ENCODE measurements at regions of chr3 and their contacts with region 1.

Region 1: GRCh38 chr3:15629860-15630597 is 28.5 kb downstream of the BTD start:
- DNase-seq: peak; percentile 71
- H3K4me3 Mint-ChIP-seq: peak overlapping the region; percentile 22
- H3K27ac Mint-ChIP-seq: peak overlapping the region; percentile 73
- H3K4me1 Mint-ChIP-seq: peaks cover 50% of the 10 kb centered on the region
- H3K27me3 Mint-ChIP-seq: no peaks in the 10 kb centered on the region

Region 2: DNA sequence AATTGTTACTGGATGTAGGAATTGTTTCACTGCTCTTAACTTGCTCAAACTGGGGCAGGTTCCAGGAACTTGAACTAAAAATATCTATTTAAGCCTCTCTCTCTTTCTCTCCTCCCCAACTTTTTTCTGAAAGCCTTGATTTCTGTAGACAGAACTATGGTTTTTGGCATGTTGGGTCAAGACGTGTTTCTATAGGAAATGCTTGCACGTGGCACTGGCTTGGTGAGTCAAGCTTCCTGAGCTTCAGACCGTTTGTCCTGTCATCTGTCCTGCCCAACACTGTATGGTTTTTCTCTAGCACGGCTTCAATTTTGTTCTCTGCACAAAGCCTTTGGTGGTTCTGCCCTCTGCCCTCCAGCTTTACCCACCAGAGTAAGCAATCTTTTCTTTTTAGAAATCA is 189.1 kb before region 1 on chr3:
- CTCF ChIA-PET with region 1: no interaction called
- POLR2A ChIA-PET with region 1: no interaction called
- intact Hi-C with region 1: no loop called
- DNase-seq: no peak
- H3K4me3 Mint-ChIP-seq: no peak overlapping the region
- H3K27ac Mint-ChIP-seq: peak overlapping the region; percentile 39
- H3K4me1 Mint-ChIP-seq: peaks cover 18% of the 10 kb centered on the region
- H3K27me3 Mint-ChIP-seq: no peaks in the 10 kb centered on the region

Region 3: DNA sequence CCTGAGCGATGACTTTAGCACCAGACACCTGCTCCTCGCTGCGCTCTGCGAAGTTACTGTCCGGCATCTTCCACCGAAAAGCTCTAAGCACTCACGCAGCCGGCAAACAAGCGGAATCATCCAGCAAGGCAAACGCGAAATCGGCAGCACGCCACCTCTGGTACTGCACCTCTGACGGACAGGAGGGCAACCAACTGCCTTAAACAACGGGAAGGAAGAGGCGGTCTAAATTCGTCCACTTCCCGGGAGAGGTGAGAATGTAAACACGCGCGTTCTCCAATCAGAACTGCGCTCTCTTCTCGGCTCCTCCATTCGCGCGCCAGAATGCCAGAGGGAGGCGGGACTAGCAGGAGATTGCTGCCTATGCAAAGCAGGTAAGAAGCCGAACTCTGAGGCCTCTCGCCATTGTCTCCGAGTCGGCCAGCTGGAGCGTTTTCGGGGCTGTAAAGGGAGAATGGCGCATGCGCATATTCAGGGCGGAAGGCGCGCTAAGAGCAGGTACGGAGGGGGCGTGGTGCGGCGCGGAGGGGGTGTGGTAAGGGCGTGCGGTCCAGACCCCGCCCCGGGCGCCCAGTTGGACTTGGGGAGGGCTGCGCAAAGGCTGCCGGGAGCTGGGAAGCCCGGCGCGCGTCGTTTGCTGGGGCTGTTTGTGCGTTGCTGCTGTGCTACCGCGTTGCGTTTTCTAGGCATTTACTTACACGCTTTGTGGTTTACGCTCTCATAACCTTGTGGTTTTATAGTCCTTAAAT is 28.5 kb before region 1 on chr3 and contains the starts of genes BTD and HACL1:
- CTCF ChIA-PET with region 1: interaction called, 3 read pairs
- POLR2A ChIA-PET with region 1: interaction called, 3 read pairs
- intact Hi-C with region 1: loop called (anchors 2 kb)
- DNase-seq: peak; percentile 98
- H3K4me3 Mint-ChIP-seq: peak within 1 kb of the TSS; percentile 99
- H3K27ac Mint-ChIP-seq: peak within 1 kb of the TSS; percentile 94
- H3K4me1 Mint-ChIP-seq: peaks cover 43% of the 10 kb centered on the region
- H3K27me3 Mint-ChIP-seq: no peaks in the 10 kb centered on the region
- total RNA-seq, gene BTD: 8.6 to 8.7 TPM
- total RNA-seq, gene HACL1: 29.9 to 30.0 TPM

Region 4: DNA sequence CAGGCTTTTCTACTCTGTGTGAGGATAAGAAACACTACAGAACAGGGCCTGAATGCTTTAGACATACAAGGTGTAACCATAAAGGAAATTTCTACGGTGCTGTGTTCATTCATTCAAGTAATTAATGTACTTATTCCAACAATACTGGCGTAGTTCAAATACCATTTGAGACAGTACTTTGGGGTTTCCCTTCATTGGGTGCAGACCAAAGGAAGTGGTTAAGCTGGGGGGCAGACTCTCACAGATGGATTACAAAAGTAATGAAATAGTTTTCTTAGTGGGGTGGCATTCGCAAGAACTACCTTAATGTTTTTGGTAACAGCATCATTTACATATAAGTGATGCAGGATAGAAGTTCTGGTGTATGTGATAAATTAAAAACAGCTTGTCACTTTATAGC is 37.5 kb after region 1 on chr3:
- CTCF ChIA-PET with region 1: interaction called, 4 read pairs
- POLR2A ChIA-PET with region 1: no interaction called
- intact Hi-C with region 1: loop called (anchors 2 kb)
- DNase-seq: peak; percentile 56
- H3K4me3 Mint-ChIP-seq: no peak overlapping the region
- H3K27ac Mint-ChIP-seq: no peak overlapping the region
- H3K4me1 Mint-ChIP-seq: peaks cover 20% of the 10 kb centered on the region
- H3K27me3 Mint-ChIP-seq: no peaks in the 10 kb centered on the region

Region 5: GRCh38 chr3:15797642-15798303 is 167.7 kb after region 1 on chr3 and contains the start of gene ANKRD28:
- CTCF ChIA-PET with region 1: interaction called, 4 read pairs
- POLR2A ChIA-PET with region 1: no interaction called
- intact Hi-C with region 1: loop called (anchors 1 kb)
- DNase-seq: no peak
- H3K4me3 Mint-ChIP-seq: peak within 1 kb of the TSS; percentile 62
- H3K27ac Mint-ChIP-seq: peak within 1 kb of the TSS; percentile 91
- H3K4me1 Mint-ChIP-seq: peaks cover 76% of the 10 kb centered on the region
- H3K27me3 Mint-ChIP-seq: no peaks in the 10 kb centered on the region
- total RNA-seq, gene ANKRD28: 31.4 to 34.8 TPM

Region 6: GRCh38 chr3:15815696-15816095 is 185.7 kb after region 1 on chr3:
- CTCF ChIA-PET with region 1: interaction called, 30 read pairs
- POLR2A ChIA-PET with region 1: no interaction called
- intact Hi-C with region 1: loop called (anchors 1 kb)
- DNase-seq: no peak
- H3K4me3 Mint-ChIP-seq: no peak overlapping the region
- H3K27ac Mint-ChIP-seq: no peak overlapping the region
- H3K4me1 Mint-ChIP-seq: peaks cover 48% of the 10 kb centered on the region
- H3K27me3 Mint-ChIP-seq: no peaks in the 10 kb centered on the region

Region 7: DNA sequence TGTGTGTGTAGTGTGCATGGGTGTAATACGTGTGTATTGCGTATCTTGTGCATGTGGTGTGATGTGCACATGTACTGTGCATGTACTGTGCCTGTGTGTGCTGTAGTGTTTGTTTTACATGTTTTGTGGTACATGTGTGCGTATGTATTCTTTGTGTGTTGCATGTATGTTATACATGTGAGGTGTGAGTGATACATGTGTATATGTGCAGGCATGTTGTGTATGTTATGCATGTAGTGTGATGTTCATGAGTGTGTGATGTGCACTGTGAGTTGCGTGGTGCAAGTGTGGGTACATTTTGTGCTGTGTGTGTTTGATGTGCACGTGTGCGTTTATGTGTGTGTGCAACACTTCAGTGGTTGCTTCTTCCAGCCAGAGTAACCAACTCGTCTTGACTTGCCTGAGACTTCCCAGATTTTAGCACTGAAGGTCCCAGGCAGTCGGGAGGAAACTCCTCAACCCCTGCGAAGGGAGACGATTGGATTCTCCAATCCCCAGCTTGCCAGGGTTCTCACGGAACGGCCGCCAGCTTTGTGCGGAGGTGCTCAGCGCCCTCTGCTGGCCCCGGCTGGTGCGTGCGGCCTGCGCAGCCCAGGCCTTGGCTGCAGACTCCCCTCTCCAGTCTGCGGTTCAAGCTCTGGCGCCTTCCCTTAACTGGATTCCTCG is 548.1 kb after region 1 on chr3:
- CTCF ChIA-PET with region 1: interaction called, 4 read pairs
- POLR2A ChIA-PET with region 1: no interaction called
- intact Hi-C with region 1: loop called (anchors 1 kb)
- DNase-seq: peak; percentile 74
- H3K4me3 Mint-ChIP-seq: no peak overlapping the region
- H3K27ac Mint-ChIP-seq: no peak overlapping the region
- H3K4me1 Mint-ChIP-seq: peaks cover 3% of the 10 kb centered on the region
- H3K27me3 Mint-ChIP-seq: peaks cover 13% of the 10 kb centered on the region

Measured in activated CD4-positive, alpha-beta memory T cell treated with anti-CD3 and anti-CD28 coated beads for 36 hours (primary cell).